IMR-90 (cell line): ENCODE measurements at regions of chr4 and their contacts with region 1.

Region 1: GRCh38 chr4:56301181-56302076 is 85.9 kb downstream of the AASDH start:
- DNase-seq: peak; percentile 86
- ATAC-seq: peak; percentile 97
- H3K4me3 ChIP-seq: no peak overlapping the region
- H3K27ac ChIP-seq: no peak overlapping the region
- H3K4me1 ChIP-seq: no peaks in the 10 kb centered on the region
- H3K27me3 ChIP-seq: no peaks in the 10 kb centered on the region; the same call in 1 of the 2 replicates
- CTCF ChIP-seq: peak; percentile 87
- POLR2A ChIP-seq: no peak
- RAD21 ChIP-seq: peak; percentile 93

Region 2: GRCh38 chr4:56048702-56049431 is 252.6 kb before region 1 on chr4:
- CTCF ChIA-PET with region 1: no interaction called
- POLR2A ChIA-PET with region 1: no interaction called
- dilution Hi-C with region 1: no loop called
- in situ Hi-C with region 1: no loop called
- intact Hi-C with region 1: loop called (anchors 2 kb)
- DNase-seq: peak; percentile 39
- ATAC-seq: peak; percentile 99
- H3K4me3 ChIP-seq: peak overlapping the region; percentile 58
- H3K27ac ChIP-seq: no peak overlapping the region
- H3K4me1 ChIP-seq: no peaks in the 10 kb centered on the region
- H3K27me3 ChIP-seq: peaks cover 18% of the 10 kb centered on the region
- CTCF ChIP-seq: peak; percentile 52
- POLR2A ChIP-seq: no peak
- RAD21 ChIP-seq: peak; percentile 36; the same call in 1 of the 2 replicates

Region 3: DNA sequence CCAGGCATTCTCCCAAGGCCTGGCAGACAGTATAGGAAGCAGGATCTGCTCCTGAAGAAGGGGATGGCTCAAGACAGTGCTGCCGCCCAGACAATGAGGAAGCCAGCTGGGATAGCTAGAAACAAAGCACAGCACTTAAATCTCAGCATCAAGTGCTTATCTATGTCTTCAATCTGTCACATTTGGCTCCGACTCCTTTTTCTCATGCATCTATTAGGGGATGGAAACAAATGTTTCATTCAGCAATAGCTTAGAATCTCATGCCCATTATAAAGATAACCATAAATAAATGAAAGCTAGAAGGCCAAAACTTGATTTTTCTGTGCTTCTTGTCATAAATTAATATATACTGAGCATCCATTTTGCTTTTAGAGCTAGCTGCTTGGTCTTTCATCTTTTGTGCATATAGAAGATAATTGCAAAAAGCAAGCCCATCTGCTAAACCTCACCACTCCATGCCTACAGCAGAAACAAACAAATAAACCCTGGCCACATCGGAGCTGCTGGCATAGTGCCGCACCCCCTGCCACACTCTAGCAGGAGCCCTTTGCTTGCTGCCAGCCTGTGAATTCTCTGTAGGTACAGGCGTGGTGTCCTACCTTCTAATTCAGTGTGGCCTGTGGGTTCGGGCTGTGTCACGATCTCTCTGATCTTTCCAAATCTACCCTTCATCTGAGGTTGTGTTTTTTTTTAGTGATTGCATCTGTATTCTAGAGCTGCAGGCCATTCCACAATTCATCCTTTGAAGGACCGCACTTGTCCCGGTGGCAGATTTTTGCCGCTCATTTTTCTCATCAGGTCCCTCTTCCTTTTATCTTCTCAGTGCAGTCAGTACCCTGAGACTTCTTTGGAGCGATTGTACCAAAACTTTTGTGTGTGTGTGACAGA is 10.1 kb after region 1 on chr4:
- CTCF ChIA-PET with region 1: interaction called, 11 read pairs
- POLR2A ChIA-PET with region 1: no interaction called
- dilution Hi-C with region 1: no loop called
- in situ Hi-C with region 1: no loop called
- intact Hi-C with region 1: no loop called
- DNase-seq: no peak
- ATAC-seq: no peak
- H3K4me3 ChIP-seq: no peak overlapping the region
- H3K27ac ChIP-seq: no peak overlapping the region
- H3K4me1 ChIP-seq: no peaks in the 10 kb centered on the region
- H3K27me3 ChIP-seq: 0 out of 2 replicates have a peak, but pooled peaks cover 2% of the 10 kb centered on the region
- CTCF ChIP-seq: no peak
- POLR2A ChIP-seq: no peak
- RAD21 ChIP-seq: no peak

Region 4: GRCh38 chr4:56544573-56545131 is 243.2 kb after region 1 on chr4:
- CTCF ChIA-PET with region 1: no interaction called
- POLR2A ChIA-PET with region 1: no interaction called
- dilution Hi-C with region 1: no loop called
- in situ Hi-C with region 1: no loop called
- intact Hi-C with region 1: loop called (anchors 5 kb)
- DNase-seq: peak; percentile 84
- ATAC-seq: peak; percentile 99
- H3K4me3 ChIP-seq: peak overlapping the region; percentile 49
- H3K27ac ChIP-seq: no peak overlapping the region
- H3K4me1 ChIP-seq: no peaks in the 10 kb centered on the region
- H3K27me3 ChIP-seq: no peaks in the 10 kb centered on the region
- CTCF ChIP-seq: peak; percentile 98
- POLR2A ChIP-seq: no peak
- RAD21 ChIP-seq: peak; percentile 74

Region 5: DNA sequence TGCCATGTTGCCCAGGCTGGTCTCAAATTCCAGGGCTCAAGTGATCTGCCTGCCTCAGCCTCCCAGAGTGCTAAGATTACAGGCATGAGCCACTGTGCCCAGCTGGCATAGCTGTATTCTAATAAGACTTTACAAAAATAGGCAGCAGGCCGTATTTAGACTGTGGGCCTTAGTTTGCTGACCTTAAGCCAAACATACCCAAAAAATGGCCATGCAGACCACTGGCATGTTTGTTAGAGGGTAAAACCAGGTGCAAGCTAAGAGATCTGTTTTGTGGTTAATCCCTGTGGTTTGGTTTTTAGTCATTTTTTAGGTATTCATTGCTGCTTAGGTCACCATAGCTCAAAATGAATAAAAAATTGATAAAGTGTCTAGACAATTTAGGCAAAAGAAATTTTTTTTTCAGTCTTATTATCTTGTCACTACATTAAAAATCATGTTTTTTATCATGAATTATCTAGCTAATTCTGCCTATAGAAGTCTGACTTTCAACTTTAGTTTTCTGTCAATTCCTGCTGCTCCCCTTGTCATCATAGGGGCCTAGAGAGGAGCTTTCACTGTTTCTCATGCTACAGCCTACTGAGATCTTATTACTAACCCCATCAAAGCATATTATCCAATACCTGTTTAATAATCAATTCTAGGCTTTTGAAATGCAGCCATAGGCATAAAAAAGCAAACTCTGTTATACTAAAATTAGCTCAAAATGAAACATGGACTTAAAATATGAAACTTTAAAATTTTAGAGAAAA is 527.5 kb after region 1 on chr4:
- CTCF ChIA-PET with region 1: no interaction called
- POLR2A ChIA-PET with region 1: no interaction called
- dilution Hi-C with region 1: no loop called
- in situ Hi-C with region 1: loop called (anchors 25 kb)
- intact Hi-C with region 1: no loop called
- DNase-seq: peak; percentile 56
- ATAC-seq: no peak
- H3K4me3 ChIP-seq: no peak overlapping the region
- H3K27ac ChIP-seq: no peak overlapping the region
- H3K4me1 ChIP-seq: no peaks in the 10 kb centered on the region
- H3K27me3 ChIP-seq: peaks cover 5% of the 10 kb centered on the region
- CTCF ChIP-seq: no peak
- POLR2A ChIP-seq: no peak
- RAD21 ChIP-seq: no peak